Mammary epithelial cell (primary cell): ENCODE measurements at regions of chr5 and their contacts with region 1.

Region 1: DNA sequence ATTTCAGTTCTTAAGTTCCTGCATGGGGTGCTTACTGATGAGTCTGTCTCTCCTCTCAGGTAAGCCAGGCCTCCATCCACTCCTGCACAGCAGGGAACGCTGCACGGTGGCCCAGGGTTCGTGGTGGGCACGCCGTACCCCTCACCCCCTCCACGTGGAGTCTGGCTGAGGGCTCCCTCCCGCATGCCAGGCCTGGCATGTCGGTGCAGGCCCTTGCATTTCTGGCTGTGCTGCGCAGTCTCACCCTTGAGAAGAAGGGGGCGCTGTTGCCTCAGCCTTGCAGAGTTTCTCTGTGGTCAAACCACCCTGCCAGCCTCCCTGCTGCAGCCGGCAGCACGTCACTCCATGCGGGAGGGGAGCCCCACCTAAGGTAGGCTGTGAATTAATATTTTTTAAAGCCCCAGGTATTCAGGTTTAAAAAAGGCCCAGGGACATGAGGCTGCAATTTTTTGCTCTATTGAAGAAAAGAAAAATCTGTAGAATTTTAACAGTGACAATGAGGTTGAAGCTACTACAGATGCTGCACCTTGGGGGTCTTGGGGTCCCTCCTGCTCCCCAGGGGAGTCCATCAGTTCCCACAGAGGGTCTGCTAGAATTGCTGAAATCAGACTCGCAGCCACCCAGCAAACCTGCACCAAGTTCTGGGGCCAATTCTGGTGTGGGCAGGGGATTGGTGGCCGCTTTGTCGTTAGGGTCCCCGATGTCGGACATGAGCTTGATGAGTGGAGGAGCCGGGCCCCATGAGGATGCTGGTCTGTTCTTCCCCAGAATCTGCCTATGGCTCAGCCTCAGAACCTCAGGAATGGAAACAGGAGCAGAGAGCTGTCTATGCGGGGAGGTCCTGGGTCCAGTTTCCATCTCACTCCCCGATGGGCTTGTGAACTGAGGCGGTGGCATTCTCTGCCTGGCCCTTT is 52.6 kb downstream of the TENT4A start:
- DNase-seq: peak; percentile 79
- H3K4me3 ChIP-seq: peak overlapping the region; percentile 8 to 29 (median 23)
- H3K27ac ChIP-seq: peak overlapping the region; percentile 41
- H3K4me1 ChIP-seq: peaks cover 25% of the 10 kb centered on the region
- H3K27me3 ChIP-seq: no peaks in the 10 kb centered on the region
- CTCF ChIP-seq: peak; percentile 91 to 94

Region 2: GRCh38 chr5:6837519-6838110 is 71.7 kb after region 1 on chr5:
- CTCF ChIA-PET with region 1: no interaction called
- dilution Hi-C with region 1: no loop called
- in situ Hi-C with region 1: no loop called
- intact Hi-C with region 1: loop called (anchors 1 kb)
- DNase-seq: no peak
- H3K4me3 ChIP-seq: no peak overlapping the region
- H3K27ac ChIP-seq: no peak overlapping the region
- H3K4me1 ChIP-seq: no peaks in the 10 kb centered on the region
- H3K27me3 ChIP-seq: no peaks in the 10 kb centered on the region
- CTCF ChIP-seq: peak; percentile 30 to 47

Region 3: DNA sequence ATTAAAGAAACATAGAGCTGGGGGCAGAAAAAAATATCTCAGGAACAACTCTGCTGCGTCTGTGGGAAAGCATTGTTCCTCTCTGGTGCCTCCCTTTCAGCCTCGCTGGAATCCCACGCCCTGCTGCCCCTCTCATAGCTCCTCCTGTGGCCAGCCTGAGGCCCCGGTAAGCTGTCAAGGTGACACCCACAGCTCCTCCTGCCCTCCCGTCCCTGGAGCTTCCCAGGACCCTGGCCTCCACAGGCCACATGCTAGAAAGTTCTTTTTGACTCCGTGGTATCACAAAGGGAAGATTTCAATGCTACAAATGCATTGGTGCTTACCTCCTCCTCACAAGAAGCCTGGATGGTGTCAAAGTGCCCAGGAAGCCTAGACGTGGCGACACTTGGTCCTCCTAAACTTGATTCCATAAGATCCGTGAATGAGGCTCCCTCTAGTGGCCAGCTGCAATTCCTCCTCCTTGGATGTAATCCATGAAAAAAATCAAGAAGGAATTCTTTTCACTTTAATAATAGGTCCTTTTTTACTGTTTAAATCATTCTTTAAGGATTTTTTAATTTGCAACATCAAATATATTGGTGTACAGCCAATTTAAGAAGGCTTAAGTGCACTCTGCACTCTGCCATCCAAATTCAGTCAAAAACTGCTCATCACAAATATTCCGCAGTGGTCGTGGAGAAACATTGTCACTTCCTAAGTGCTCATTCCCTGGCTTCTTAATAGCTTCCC is 980.2 kb after region 1 on chr5:
- CTCF ChIA-PET with region 1: no interaction called
- dilution Hi-C with region 1: no loop called
- in situ Hi-C with region 1: loop called (anchors 10 kb)
- intact Hi-C with region 1: loop called (anchors 1 kb)
- DNase-seq: peak; percentile 38
- H3K4me3 ChIP-seq: no peak overlapping the region
- H3K27ac ChIP-seq: no peak overlapping the region
- H3K4me1 ChIP-seq: no peaks in the 10 kb centered on the region
- H3K27me3 ChIP-seq: no peaks in the 10 kb centered on the region
- CTCF ChIP-seq: peak; percentile 79 to 87

Region 4: GRCh38 chr5:7815892-7816534 is 1050.1 kb after region 1 on chr5:
- CTCF ChIA-PET with region 1: no interaction called
- dilution Hi-C with region 1: no loop called
- in situ Hi-C with region 1: no loop called
- intact Hi-C with region 1: loop called (anchors 1 kb)
- DNase-seq: peak; percentile 31
- H3K4me3 ChIP-seq: no peak overlapping the region
- H3K27ac ChIP-seq: no peak overlapping the region
- H3K4me1 ChIP-seq: no peaks in the 10 kb centered on the region
- H3K27me3 ChIP-seq: no peaks in the 10 kb centered on the region
- CTCF ChIP-seq: no peak

Region 5: DNA sequence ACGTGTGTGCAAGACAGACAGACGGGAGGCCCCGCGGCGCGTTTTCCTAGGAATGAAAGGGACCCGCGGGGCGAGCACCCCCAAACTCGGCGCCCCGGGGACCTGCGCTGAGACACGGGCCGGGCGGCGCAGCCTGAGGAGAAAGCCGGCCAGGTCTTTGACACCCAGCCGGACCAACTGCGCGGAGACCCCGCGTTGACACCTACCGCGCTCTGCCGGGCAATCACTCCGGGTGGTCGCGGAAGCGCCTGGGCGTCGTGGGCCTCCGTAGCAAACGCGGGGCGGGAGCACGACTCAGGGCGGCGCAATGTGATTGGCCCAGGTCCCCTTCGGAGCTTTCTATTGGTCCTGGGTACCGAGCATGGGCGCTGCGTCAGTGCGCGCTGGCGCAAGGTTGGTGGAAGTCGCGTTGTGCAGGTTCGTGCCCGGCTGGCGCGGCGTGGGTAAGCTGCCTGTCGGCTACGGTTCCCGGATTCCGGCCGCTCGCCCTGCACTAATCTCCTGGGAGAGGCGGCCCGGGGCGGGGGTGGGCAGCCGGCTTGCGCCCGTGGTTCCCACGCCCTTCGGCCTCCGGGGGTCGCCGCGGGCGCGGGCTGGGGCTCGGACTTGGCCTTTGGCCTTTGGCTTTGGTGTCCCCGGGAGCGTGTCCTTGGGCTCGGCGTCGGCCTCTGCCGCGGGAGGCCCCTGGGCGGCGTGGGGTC is 1103.1 kb after region 1 on chr5 and contains the starts of genes FASTKD3 and MTRR:
- CTCF ChIA-PET with region 1: no interaction called
- dilution Hi-C with region 1: no loop called
- in situ Hi-C with region 1: loop called in 1 of 2 experiments (anchors 25 kb)
- intact Hi-C with region 1: no loop called
- DNase-seq: peak; percentile 89
- H3K4me3 ChIP-seq: peak within 1 kb of the TSS; percentile 87 to 97 (median 92)
- H3K27ac ChIP-seq: peak within 1 kb of the TSS; percentile 74
- H3K4me1 ChIP-seq: peaks cover 16% of the 10 kb centered on the region
- H3K27me3 ChIP-seq: no peaks in the 10 kb centered on the region
- CTCF ChIP-seq: no peak
- total RNA-seq, gene FASTKD3: 7.5 to 18.0 TPM
- total RNA-seq, gene MTRR: 36.3 to 52.9 TPM